ENCODE measurements at regions of chr22 and their contacts with region 1.

Region 1: DNA sequence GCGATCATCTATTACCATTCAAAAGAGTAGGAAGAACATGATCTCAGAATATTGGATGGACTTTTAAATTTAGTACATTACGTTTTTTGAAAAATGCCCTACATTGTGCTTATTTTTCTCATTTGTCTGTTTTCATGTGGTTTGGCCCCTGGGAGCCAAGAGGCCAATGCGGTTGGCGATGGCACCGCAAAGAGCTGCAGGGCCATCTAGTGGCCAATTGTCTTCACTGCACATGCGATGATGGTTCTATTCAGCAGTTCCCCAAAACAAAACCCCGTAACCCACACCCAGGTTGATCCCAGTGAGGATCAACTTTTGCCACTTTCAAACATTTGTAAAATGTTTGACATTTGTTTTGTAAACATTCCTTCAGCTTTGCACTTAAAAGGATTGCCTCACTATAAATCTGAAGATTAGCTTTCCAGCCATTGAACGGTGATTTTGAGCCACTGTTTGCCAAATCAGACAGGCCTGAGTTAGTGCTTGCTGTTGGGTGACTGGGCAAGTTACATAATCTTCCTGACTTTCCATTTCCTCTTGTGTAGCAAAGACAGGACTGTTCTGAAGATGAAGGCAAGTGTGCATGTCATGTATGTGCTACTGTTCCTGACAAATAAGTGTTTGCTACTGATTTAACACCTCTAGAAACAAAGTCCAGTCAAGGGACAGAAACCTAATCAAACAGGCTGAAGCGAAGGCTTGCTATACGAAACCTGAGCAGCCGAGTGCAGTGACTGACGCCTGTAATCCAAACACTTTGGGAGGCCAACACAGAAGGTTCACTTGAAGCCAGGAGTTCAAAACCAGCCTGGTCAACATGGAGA is 29.2 kb upstream of the XBP1 start:
- DNase-seq: peak; percentile 84 to 91 (median 86)
- ATAC-seq: peak; percentile 95
- H3K4me3 ChIP-seq: no peak overlapping the region
- H3K27ac ChIP-seq: peak overlapping the region; percentile 27 to 66 (median 62)
- H3K4me1 ChIP-seq: peaks cover 35% of the 10 kb centered on the region
- H3K27me3 ChIP-seq: no peaks in the 10 kb centered on the region
- CTCF ChIP-seq: peak; percentile 88 to 99 (median 98)
- POLR2A ChIP-seq: no peak

Region 2: GRCh38 chr22:28604966-28605761 is 224.4 kb before region 1 on chr22:
- intact Hi-C with region 1: loop called (anchors 5 kb)
- DNase-seq: no peak
- ATAC-seq: no peak
- H3K4me3 ChIP-seq: no peak overlapping the region
- H3K27ac ChIP-seq: no peak overlapping the region
- H3K4me1 ChIP-seq: peaks cover 9% of the 10 kb centered on the region
- H3K27me3 ChIP-seq: no peaks in the 10 kb centered on the region
- CTCF ChIP-seq: no peak
- POLR2A ChIP-seq: no peak

Region 3: GRCh38 chr22:28783786-28784671 is 45.5 kb before region 1 on chr22:
- intact Hi-C with region 1: loop called (anchors 10 kb)
- DNase-seq: peak in 1 of 4 donors; percentile 10
- ATAC-seq: peak; percentile 27
- H3K4me3 ChIP-seq: no peak overlapping the region
- H3K27ac ChIP-seq: peak overlapping the region; percentile 4 to 53 (median 38)
- H3K4me1 ChIP-seq: peaks cover 28% of the 10 kb centered on the region
- H3K27me3 ChIP-seq: no peaks in the 10 kb centered on the region
- CTCF ChIP-seq: no peak
- POLR2A ChIP-seq: no peak

Region 4: DNA sequence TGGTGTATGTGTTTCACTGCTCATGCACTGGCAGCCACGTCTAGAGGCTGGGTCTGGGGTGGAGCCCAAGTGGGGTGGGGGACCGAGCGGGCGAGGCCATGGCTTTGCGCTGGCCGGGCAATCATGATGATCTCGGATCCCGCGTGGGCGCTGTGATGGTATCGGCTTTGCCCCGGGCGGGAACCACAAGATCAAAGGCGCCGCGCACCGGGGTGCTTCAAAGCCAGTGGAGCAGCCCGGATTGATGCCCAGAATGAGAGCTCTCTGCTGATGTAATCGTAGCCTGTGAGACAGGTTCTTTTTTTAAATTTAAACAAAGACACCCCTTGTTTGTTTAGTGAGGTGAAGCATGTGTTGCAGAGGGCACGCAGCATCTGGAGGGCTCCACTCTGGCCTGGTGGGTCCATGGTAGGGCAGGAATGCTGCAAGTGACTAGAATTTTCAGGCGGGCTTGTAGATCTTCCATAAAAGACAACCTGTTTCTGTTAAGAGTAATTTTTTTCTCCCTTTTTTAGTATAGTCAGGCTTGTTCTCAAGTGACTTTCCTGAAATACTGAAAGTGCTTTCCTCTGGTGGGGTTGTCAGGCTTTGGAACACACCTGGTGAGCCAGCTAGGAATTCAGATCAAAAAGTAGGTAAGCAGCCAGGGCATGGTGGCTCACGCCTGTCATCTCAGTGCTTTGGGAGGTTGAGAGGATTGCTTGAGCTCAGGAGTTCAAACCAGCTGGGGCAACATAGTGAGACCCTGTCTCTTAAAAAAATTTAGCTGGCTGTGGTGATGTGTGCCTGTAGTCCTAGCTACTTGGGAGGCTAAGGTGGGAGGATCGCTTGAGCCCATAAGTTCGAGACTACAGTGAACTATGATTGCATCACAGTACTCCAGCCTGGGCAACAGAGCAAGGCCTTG is 94.5 kb after region 1 on chr22:
- intact Hi-C with region 1: no loop called
- DNase-seq: peak; percentile 76 to 85 (median 84)
- ATAC-seq: peak; percentile 86
- H3K4me3 ChIP-seq: no peak overlapping the region
- H3K27ac ChIP-seq: peak overlapping the region in 3 of 4 donors; percentile 58 to 72 (median 69)
- H3K4me1 ChIP-seq: peaks cover 81% of the 10 kb centered on the region
- H3K27me3 ChIP-seq: no peaks in the 10 kb centered on the region
- CTCF ChIP-seq: no peak
- POLR2A ChIP-seq: no peak

Region 5: GRCh38 chr22:28935713-28936112 is 106.1 kb after region 1 on chr22:
- intact Hi-C with region 1: no loop called
- DNase-seq: no peak
- ATAC-seq: no peak
- H3K4me3 ChIP-seq: no peak overlapping the region
- H3K27ac ChIP-seq: no peak overlapping the region
- H3K4me1 ChIP-seq: peaks cover 36% of the 10 kb centered on the region
- H3K27me3 ChIP-seq: no peaks in the 10 kb centered on the region
- CTCF ChIP-seq: no peak
- POLR2A ChIP-seq: no peak

Region 6: GRCh38 chr22:29152045-29152953 is 322.7 kb after region 1 on chr22:
- intact Hi-C with region 1: no loop called
- DNase-seq: peak in 1 of 4 donors; percentile 31
- ATAC-seq: no peak
- H3K4me3 ChIP-seq: no peak overlapping the region
- H3K27ac ChIP-seq: peak overlapping the region in 2 of 4 donors; percentile 14 to 65
- H3K4me1 ChIP-seq: peaks cover 10% of the 10 kb centered on the region
- H3K27me3 ChIP-seq: no peaks in the 10 kb centered on the region
- CTCF ChIP-seq: no peak
- POLR2A ChIP-seq: no peak

Measured in body of pancreas (tissue), 4 donors.